ENCODE measurements at regions of chr3 and their contacts with region 1.

Region 1: GRCh38 chr3:59286791-59287531 is 237.1 kb upstream of the CFAP20DC start:
- DNase-seq: no peak
- H3K4me3 ChIP-seq: no peak overlapping the region
- H3K27ac ChIP-seq: no peak overlapping the region
- H3K4me1 ChIP-seq: no peaks in the 10 kb centered on the region
- H3K27me3 ChIP-seq: no peaks in the 10 kb centered on the region
- CTCF ChIP-seq: no peak
- POLR2A ChIP-seq: no peak

Region 2: DNA sequence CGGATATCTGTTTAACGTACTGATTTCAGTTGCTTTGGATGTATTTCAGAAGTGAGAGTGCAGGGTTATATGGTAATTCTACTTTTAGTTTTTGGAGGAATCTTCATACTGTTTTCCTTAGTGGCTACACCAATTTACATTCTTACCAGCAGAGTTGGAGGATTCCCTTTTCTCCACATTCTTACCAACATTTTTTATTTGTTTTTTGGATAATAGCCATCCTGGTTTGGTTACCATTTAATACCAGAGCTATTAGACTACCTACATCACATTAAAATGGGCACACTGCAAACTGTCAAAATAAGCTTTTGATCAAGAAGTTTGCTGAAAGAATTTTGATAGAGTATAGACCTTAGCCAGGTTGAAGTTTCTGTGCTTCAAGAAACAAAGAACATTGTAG is 19.9 kb before region 1 on chr3:
- intact Hi-C with region 1: loop called (anchors 1 kb)
- DNase-seq: no peak
- H3K4me3 ChIP-seq: no peak overlapping the region
- H3K27ac ChIP-seq: no peak overlapping the region
- H3K4me1 ChIP-seq: no peaks in the 10 kb centered on the region
- H3K27me3 ChIP-seq: no peaks in the 10 kb centered on the region
- CTCF ChIP-seq: no peak
- POLR2A ChIP-seq: no peak